ENCODE measurements at regions of chr1 and their contacts with region 1.

Region 1: GRCh38 chr1:165367375-165367993 is 11.0 kb upstream of the LMX1A start:
- DNase-seq: peak; percentile 79 to 95
- H3K4me3 ChIP-seq: no peak overlapping the region
- CTCF ChIP-seq: peak in 1 of 3 donors; percentile 72
- POLR2A ChIP-seq: no peak

Region 2: GRCh38 chr1:165144757-165145397 is 222.6 kb before region 1 on chr1:
- intact Hi-C with region 1: loop called (anchors 10 kb)
- DNase-seq: peak in 1 of 2 donors; percentile 37
- H3K4me3 ChIP-seq: no peak overlapping the region
- CTCF ChIP-seq: no peak
- POLR2A ChIP-seq: no peak

Region 3: DNA sequence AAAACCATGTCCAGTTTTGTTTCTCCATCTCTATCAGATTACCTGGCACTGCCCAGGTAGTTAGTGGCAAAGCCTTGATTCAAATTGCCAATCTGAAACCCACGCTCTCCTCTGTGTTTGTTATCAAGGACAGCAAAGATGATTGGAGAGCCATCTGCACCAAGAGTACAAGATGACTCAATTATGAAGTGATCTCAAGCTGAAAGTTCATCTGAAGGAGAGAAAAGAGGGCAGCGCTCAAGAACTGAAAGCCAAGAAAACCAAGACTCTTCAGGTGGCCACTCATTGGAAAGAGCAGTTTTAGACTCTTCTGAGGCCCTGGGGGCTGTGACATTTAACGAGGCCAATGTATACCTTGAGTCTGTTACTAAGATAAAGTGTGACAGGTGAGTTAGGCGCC is 63.6 kb after region 1 on chr1:
- intact Hi-C with region 1: no loop called
- DNase-seq: no peak
- H3K4me3 ChIP-seq: no peak overlapping the region
- CTCF ChIP-seq: no peak
- POLR2A ChIP-seq: no peak

Region 4: GRCh38 chr1:165580941-165581871 is 213.7 kb after region 1 on chr1:
- intact Hi-C with region 1: no loop called
- DNase-seq: no peak
- H3K4me3 ChIP-seq: no peak overlapping the region
- CTCF ChIP-seq: no peak
- POLR2A ChIP-seq: no peak

Measured in lower leg skin (tissue), 4 donors.